ENCODE measurements at regions of chr11 and their contacts with region 1.

Region 1: GRCh38 chr11:45771566-45772448 is 33.1 kb upstream of the SLC35C1 start:
- DNase-seq: peak; percentile 85 to 93
- ATAC-seq: peak; percentile 97 to 98 (median 98)
- H3K4me3 ChIP-seq: peak overlapping the region; percentile 80
- H3K27ac ChIP-seq: peak overlapping the region; percentile 83
- H3K4me1 ChIP-seq: peaks cover 5% of the 10 kb centered on the region
- H3K27me3 ChIP-seq: no peaks in the 10 kb centered on the region
- CTCF ChIP-seq: peak; percentile 89

Region 2: GRCh38 chr11:45339729-45340519 is 431.9 kb before region 1 on chr11:
- intact Hi-C with region 1: loop called (anchors 2 to 5 kb)
- DNase-seq: peak; percentile 92 to 96
- ATAC-seq: peak; percentile 94 to 97 (median 96)
- H3K4me3 ChIP-seq: peak overlapping the region; percentile 37
- H3K27ac ChIP-seq: no peak overlapping the region
- H3K4me1 ChIP-seq: no peaks in the 10 kb centered on the region
- H3K27me3 ChIP-seq: peaks cover 0 to 9% (median 0%) of the 10 kb centered on the region in 3 donors
- CTCF ChIP-seq: peak; percentile 92

Region 3: DNA sequence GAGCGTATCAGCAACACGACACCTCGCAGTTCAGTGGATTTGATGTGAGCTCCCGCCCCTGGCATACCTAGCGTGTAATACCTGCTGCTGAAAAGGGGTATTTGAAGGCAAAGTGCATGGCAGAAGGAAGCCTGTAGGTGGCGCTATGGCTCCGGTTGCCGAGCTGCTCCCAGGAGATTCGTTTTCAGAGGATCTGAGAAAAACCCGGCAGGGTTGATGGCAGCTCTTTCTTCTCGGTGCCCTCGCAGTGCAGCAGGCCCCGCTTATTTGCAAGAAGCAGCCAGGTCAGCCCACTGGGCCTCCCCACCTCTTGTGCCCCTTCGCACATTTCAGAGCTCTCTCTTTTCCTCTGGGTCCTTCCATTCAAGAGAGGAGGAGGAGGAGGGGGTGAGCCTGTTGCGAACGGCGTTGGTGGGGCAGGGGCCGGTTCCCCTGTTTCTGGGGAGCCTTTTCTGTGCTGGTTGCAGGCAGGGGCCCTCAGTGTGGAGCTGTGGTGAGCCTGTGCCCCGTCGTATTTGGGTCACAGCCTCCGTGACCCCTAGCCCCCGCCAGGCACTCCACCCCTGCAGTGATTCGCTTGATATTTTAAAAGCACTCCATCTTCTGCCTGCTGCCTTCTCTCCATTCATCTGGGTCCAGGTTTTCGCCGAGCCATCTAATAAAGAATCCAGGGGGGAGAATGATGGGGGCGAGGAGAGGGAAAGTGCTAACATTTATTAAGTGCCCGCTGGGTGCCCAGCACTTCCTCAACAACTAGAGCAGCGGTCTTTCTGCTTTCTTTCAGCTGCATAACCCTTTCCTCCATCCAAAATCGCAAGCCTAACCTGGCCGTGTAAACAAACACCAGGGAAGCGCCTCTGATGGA is 400.3 kb before region 1 on chr11:
- intact Hi-C with region 1: loop called (anchors 1 to 10 kb)
- DNase-seq: peak; percentile 45 to 68
- ATAC-seq: peak; percentile 59 to 74 (median 62)
- H3K4me3 ChIP-seq: no peak overlapping the region
- H3K27ac ChIP-seq: no peak overlapping the region
- H3K4me1 ChIP-seq: no peaks in the 10 kb centered on the region
- H3K27me3 ChIP-seq: peaks cover 0 to 16% (median 0%) of the 10 kb centered on the region in 3 donors
- CTCF ChIP-seq: peak; percentile 79

Region 4: DNA sequence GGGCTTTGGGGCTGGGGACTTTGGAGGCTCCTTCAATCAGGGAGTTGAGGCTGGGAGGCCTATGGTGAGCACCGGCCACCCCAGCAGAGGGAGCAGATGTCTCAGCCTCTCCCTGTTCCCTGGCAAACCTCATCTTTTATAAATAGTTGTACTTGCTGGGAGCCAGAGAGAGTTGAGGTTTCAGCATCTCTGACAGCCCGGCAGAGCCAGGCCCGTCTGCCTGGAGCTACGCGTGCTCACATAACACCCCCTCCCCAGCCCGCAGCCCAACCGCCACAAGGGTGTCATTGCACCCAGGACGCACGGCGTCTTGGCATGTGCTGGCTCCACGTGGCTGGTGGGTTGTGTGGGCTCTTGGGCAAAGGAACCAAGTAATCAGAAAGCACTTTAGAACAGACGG is 233.4 kb before region 1 on chr11:
- intact Hi-C with region 1: loop called (anchors 2 to 5 kb)
- DNase-seq: peak; percentile 22 to 63
- ATAC-seq: peak; percentile 86 to 99 (median 94)
- H3K4me3 ChIP-seq: no peak overlapping the region
- H3K27ac ChIP-seq: no peak overlapping the region
- H3K4me1 ChIP-seq: no peaks in the 10 kb centered on the region
- H3K27me3 ChIP-seq: no peaks in the 10 kb centered on the region
- CTCF ChIP-seq: peak; percentile 42

Region 5: GRCh38 chr11:45655347-45655756 is 116.5 kb before region 1 on chr11:
- intact Hi-C with region 1: loop called in 1 of 2 experiments (anchors 2 kb)
- DNase-seq: peak; percentile 76 to 87
- ATAC-seq: peak; percentile 76 to 89 (median 82)
- H3K4me3 ChIP-seq: no peak overlapping the region
- H3K27ac ChIP-seq: no peak overlapping the region
- H3K4me1 ChIP-seq: peaks cover 20% of the 10 kb centered on the region
- H3K27me3 ChIP-seq: peaks cover 0 to 19% (median 0%) of the 10 kb centered on the region in 3 donors
- CTCF ChIP-seq: peak; percentile 89

Region 6: GRCh38 chr11:45665206-45665932 is 106.4 kb before region 1 on chr11 and contains the start of gene CHST1:
- intact Hi-C with region 1: loop called in 1 of 2 experiments (anchors 5 kb)
- DNase-seq: peak; percentile 73 to 77
- ATAC-seq: peak; percentile 60 to 74 (median 68)
- H3K4me3 ChIP-seq: peak within 1 kb of the TSS; percentile 80
- H3K27ac ChIP-seq: peak within 1 kb of the TSS; percentile 41
- H3K4me1 ChIP-seq: peaks cover 10% of the 10 kb centered on the region
- H3K27me3 ChIP-seq: peaks cover 0 to 48% (median 9%) of the 10 kb centered on the region in 3 donors
- CTCF ChIP-seq: no peak
- total RNA-seq, gene CHST1: 3.2 to 21.4 (median 9.5) TPM

Region 7: DNA sequence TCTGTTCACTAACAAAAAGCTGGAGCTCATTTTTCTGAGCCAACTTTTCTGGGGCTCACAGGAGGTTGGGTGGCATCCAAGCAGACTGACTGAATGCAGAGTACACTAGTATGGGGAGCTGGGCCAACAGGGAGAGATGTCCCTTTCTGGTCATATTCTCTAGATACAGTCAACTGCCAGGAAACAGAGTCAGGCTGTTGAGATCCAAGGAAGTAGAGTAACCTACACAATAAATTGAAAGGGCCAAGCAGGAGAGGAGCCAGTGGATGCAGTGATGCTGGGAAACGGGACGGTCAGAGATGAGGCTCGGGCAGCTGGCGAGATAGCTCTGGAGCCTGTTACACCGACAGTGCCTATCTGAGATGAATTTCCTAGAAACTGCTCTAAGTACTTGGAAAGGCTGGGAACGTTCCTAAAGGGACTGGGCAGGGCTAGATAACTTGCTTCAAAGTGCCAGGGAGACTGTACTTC is 221.8 kb after region 1 on chr11:
- intact Hi-C with region 1: no loop called
- DNase-seq: peak in 1 of 2 donors; percentile 16
- ATAC-seq: peak in 2 of 4 donors; percentile 24 to 47
- H3K4me3 ChIP-seq: no peak overlapping the region
- H3K27ac ChIP-seq: no peak overlapping the region
- H3K4me1 ChIP-seq: peaks cover 29% of the 10 kb centered on the region
- H3K27me3 ChIP-seq: no peaks in the 10 kb centered on the region
- CTCF ChIP-seq: no peak